Activated naive CD4-positive, alpha-beta T cell treated with anti-CD3 and anti-CD28 coated beads, Interleukin-2, amount 10 ng/mL, durations not matched to agents 7 days and 5 days (primary cell): ENCODE measurements at regions of chr12 and their contacts with region 1.

Region 1: GRCh38 chr12:47767216-47767724 is 5.8 kb upstream of the SLC48A1 start:
- DNase-seq: peak; percentile 86
- H3K4me3 Mint-ChIP-seq: no peak overlapping the region
- H3K27ac Mint-ChIP-seq: no peak overlapping the region
- H3K4me1 Mint-ChIP-seq: peaks cover 16% of the 10 kb centered on the region
- H3K27me3 Mint-ChIP-seq: peaks cover 46% of the 10 kb centered on the region

Region 2: DNA sequence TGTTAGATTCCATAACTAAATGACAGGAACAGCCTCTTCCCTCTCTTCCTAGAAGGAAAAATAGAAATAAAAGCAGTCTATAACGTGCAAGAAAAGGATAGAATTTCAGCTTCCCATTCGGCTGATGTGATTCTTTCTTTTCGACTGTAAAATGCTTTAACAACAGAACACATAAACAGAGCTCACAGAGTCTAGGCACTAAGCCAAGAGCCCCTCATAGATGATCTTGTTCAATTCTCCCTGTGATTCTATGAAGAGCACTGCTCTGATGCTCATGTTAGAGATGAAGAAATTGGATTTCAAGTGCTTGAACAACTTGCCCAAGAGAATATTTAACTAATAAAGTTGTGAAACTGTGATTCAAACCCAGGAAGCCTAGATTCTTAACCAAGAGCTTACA is 294.2 kb before region 1 on chr12:
- CTCF ChIA-PET with region 1: no interaction called
- DNase-seq: no peak
- H3K4me3 Mint-ChIP-seq: no peak overlapping the region
- H3K27ac Mint-ChIP-seq: no peak overlapping the region
- H3K4me1 Mint-ChIP-seq: no peaks in the 10 kb centered on the region
- H3K27me3 Mint-ChIP-seq: no peaks in the 10 kb centered on the region

Region 3: GRCh38 chr12:47725893-47726292 is 41.4 kb before region 1 on chr12:
- CTCF ChIA-PET with region 1: interaction called, 12 read pairs
- DNase-seq: no peak
- H3K4me3 Mint-ChIP-seq: no peak overlapping the region
- H3K27ac Mint-ChIP-seq: no peak overlapping the region
- H3K4me1 Mint-ChIP-seq: peaks cover 16% of the 10 kb centered on the region
- H3K27me3 Mint-ChIP-seq: peaks cover 6% of the 10 kb centered on the region

Region 4: GRCh38 chr12:47779301-47779942 is 12.2 kb after region 1 on chr12:
- CTCF ChIA-PET with region 1: interaction called, 76 read pairs
- DNase-seq: peak; percentile 95
- H3K4me3 Mint-ChIP-seq: no peak overlapping the region
- H3K27ac Mint-ChIP-seq: peak overlapping the region; percentile 77
- H3K4me1 Mint-ChIP-seq: peaks cover 53% of the 10 kb centered on the region
- H3K27me3 Mint-ChIP-seq: no peaks in the 10 kb centered on the region

Region 5: GRCh38 chr12:47791874-47792273 is 24.6 kb after region 1 on chr12:
- CTCF ChIA-PET with region 1: no interaction called
- DNase-seq: no peak
- H3K4me3 Mint-ChIP-seq: no peak overlapping the region
- H3K27ac Mint-ChIP-seq: peak overlapping the region; percentile 60
- H3K4me1 Mint-ChIP-seq: peaks cover 6% of the 10 kb centered on the region
- H3K27me3 Mint-ChIP-seq: no peaks in the 10 kb centered on the region